ENCODE measurements at regions of chr2 and their contacts with region 1.

Region 1: GRCh38 chr2:73233154-73233931 is at the start of gene PRADC1:
- H3K4me3 Mint-ChIP-seq: peak within 1 kb of the TSS; percentile 90
- H3K27ac Mint-ChIP-seq: peak within 1 kb of the TSS; percentile 89
- H3K4me1 Mint-ChIP-seq: peaks cover 35% of the 10 kb centered on the region
- H3K27me3 Mint-ChIP-seq: no peaks in the 10 kb centered on the region

Region 2: DNA sequence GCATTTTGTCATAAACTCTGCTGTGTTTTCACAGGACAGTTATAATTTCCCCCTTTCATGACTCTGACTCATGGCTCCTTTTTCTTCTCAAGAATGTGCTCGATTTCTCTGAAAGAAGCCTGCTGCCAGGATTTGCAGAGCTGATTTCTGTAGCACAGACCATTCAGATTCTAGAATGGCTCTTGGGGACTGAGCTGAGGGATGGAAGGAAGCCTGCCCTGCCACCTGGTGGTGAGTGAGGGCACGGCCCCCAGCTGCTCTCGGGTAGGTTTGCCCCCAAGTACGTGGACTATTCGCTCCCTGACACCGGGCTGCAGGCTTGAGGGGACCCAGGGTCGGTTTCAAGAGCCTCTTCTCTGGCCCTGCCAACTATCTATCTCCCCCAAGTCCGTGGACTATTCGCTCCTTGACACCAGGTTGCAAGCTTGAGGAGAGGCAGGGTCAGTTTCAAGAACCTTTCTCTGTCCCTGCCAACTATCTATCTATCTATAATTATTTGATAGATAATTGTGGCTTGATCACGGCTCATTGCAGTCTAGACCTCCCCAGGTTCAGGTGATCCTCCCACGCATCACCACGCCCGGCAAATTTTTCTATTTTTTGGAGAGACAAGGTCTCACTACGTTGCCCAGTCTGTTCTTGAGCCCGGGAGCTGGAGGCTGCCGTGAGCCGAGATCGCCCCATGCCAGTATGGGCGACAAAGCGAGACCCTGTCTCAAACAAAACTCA is 20.7 kb before region 1 on chr2:
- intact Hi-C with region 1: loop called (anchors 1 kb)
- H3K4me3 Mint-ChIP-seq: no peak overlapping the region
- H3K27ac Mint-ChIP-seq: no peak overlapping the region
- H3K4me1 Mint-ChIP-seq: peaks cover 26% of the 10 kb centered on the region
- H3K27me3 Mint-ChIP-seq: peaks cover 8% of the 10 kb centered on the region

Region 3: DNA sequence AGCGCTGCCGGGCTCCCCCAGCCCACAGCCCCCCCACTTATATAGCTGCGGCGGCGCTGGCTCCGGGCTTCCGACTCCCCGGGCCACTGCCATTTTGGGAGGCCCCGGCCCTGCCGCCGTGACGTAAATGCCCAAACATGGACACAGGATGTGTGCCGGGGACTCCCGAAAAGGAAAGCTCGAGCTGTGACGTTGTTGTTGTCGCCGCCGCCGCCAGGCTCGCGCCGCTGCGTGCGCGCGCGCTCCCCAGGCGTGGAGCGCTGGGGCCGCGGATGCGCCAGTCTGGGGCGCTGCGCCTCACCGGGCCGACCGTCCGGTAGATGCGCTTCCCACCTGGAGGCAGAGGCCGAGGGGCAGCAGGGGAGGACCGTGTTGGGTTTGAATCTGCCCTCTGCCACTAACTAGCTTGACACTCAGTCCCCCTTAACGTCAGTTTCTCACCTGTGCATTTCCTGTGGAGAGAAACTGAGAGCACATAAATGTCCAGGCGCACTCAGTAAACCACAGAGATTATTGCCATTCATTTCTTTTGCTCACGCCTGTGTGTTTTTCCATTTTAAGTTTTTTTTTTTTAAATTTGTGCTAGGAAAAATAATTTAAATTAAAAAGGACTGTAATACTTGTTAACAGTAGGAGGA is 60.3 kb after region 1 on chr2 and contains the start of gene EGR4:
- intact Hi-C with region 1: loop called (anchors 2 kb)
- H3K4me3 Mint-ChIP-seq: peak within 1 kb of the TSS; percentile 80
- H3K27ac Mint-ChIP-seq: no peak within 1 kb of the TSS
- H3K4me1 Mint-ChIP-seq: peaks cover 18% of the 10 kb centered on the region
- H3K27me3 Mint-ChIP-seq: peaks cover 87% of the 10 kb centered on the region

Region 4: GRCh38 chr2:73385595-73386341 is 152.4 kb after region 1 on chr2 and contains the start of gene ALMS1:
- intact Hi-C with region 1: loop called (anchors 5 kb)
- H3K4me3 Mint-ChIP-seq: peak within 1 kb of the TSS; percentile 92
- H3K27ac Mint-ChIP-seq: peak within 1 kb of the TSS; percentile 94
- H3K4me1 Mint-ChIP-seq: peaks cover 33% of the 10 kb centered on the region
- H3K27me3 Mint-ChIP-seq: peaks cover 18% of the 10 kb centered on the region